ENCODE measurements at regions of chr12 and their contacts with region 1.

Region 1: DNA sequence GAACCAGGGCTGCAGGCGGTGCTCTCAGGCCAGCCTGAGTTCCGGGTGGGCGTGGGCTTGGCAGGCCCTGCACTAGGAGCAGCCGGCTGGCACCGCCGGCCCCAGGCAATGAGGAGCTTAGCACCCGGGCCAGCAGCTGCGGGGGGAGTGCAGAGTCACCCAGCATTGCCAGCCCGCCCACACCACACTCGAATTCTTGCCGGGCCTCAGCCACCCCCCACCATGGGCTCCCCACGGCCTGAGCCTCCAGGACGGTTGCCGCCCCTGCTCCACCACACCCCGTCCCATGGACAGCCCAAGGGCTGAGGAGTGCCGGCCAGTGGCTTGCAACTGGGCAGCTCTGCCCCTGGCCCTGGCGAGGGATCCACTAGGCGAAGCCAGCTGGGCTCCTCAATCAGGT is 453.4 kb downstream of the TMTC2 start:
- DNase-seq: no peak
- H3K4me3 Mint-ChIP-seq: no peak overlapping the region
- H3K27ac Mint-ChIP-seq: no peak overlapping the region
- H3K4me1 Mint-ChIP-seq: no peaks in the 10 kb centered on the region
- H3K27me3 Mint-ChIP-seq: no peaks in the 10 kb centered on the region

Region 2: GRCh38 chr12:83067981-83068380 is 72.2 kb before region 1 on chr12:
- intact Hi-C with region 1: no loop called
- DNase-seq: no peak
- H3K4me3 Mint-ChIP-seq: no peak overlapping the region
- H3K27ac Mint-ChIP-seq: no peak overlapping the region
- H3K4me1 Mint-ChIP-seq: no peaks in the 10 kb centered on the region
- H3K27me3 Mint-ChIP-seq: no peaks in the 10 kb centered on the region

Region 3: GRCh38 chr12:83121897-83122622 is 18.1 kb before region 1 on chr12:
- intact Hi-C with region 1: loop called (anchors 2 kb)
- DNase-seq: no peak
- H3K4me3 Mint-ChIP-seq: no peak overlapping the region
- H3K27ac Mint-ChIP-seq: no peak overlapping the region
- H3K4me1 Mint-ChIP-seq: peaks cover 5% of the 10 kb centered on the region
- H3K27me3 Mint-ChIP-seq: no peaks in the 10 kb centered on the region

Region 4: DNA sequence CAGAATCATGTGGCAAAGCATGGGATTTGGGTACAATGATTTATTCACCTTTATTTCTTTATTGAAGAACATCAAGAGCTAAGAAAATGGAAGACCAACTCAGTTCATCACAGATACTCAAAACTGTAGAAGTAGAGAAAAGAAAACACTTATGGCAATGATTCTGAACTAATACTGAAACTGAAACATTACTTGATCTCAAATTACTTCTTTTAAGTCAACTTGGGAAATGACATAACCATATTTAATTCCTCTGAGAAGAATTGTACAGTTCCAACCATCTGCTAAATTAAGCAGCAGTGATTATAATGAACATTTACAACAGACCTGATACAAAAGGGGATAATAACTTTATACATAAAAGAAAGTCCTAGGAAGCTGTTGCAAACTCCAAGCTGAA is 13.0 kb after region 1 on chr12:
- intact Hi-C with region 1: loop called (anchors 1 kb)
- DNase-seq: no peak
- H3K4me3 Mint-ChIP-seq: no peak overlapping the region
- H3K27ac Mint-ChIP-seq: no peak overlapping the region
- H3K4me1 Mint-ChIP-seq: peaks cover 6% of the 10 kb centered on the region
- H3K27me3 Mint-ChIP-seq: no peaks in the 10 kb centered on the region

Region 5: DNA sequence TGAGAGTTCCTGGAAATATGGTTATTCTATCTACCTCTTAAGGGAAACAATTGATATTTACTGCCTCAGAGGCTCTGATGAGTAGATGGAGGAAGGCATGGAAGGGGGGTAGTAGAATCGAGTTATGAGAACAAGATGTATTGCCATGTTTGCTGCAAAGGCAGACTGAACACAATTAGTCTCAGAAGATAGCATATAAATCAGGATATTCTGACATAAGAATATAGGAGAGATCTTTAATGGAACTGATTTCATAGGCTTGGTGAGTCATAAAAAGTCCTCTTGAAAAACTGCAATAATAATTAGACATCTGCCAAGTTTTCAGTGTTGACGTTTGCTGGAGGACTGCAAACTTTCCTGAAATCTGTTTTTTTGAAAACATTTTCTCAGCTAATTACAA is 182.7 kb after region 1 on chr12:
- intact Hi-C with region 1: no loop called
- DNase-seq: no peak
- H3K4me3 Mint-ChIP-seq: no peak overlapping the region
- H3K27ac Mint-ChIP-seq: no peak overlapping the region
- H3K4me1 Mint-ChIP-seq: no peaks in the 10 kb centered on the region
- H3K27me3 Mint-ChIP-seq: no peaks in the 10 kb centered on the region

Region 6: GRCh38 chr12:83865431-83865830 is 725.3 kb after region 1 on chr12:
- intact Hi-C with region 1: no loop called
- DNase-seq: no peak
- H3K4me3 Mint-ChIP-seq: no peak overlapping the region
- H3K27ac Mint-ChIP-seq: no peak overlapping the region
- H3K4me1 Mint-ChIP-seq: no peaks in the 10 kb centered on the region
- H3K27me3 Mint-ChIP-seq: no peaks in the 10 kb centered on the region